ENCODE measurements at regions of chr1 and their contacts with region 1.

Region 1: DNA sequence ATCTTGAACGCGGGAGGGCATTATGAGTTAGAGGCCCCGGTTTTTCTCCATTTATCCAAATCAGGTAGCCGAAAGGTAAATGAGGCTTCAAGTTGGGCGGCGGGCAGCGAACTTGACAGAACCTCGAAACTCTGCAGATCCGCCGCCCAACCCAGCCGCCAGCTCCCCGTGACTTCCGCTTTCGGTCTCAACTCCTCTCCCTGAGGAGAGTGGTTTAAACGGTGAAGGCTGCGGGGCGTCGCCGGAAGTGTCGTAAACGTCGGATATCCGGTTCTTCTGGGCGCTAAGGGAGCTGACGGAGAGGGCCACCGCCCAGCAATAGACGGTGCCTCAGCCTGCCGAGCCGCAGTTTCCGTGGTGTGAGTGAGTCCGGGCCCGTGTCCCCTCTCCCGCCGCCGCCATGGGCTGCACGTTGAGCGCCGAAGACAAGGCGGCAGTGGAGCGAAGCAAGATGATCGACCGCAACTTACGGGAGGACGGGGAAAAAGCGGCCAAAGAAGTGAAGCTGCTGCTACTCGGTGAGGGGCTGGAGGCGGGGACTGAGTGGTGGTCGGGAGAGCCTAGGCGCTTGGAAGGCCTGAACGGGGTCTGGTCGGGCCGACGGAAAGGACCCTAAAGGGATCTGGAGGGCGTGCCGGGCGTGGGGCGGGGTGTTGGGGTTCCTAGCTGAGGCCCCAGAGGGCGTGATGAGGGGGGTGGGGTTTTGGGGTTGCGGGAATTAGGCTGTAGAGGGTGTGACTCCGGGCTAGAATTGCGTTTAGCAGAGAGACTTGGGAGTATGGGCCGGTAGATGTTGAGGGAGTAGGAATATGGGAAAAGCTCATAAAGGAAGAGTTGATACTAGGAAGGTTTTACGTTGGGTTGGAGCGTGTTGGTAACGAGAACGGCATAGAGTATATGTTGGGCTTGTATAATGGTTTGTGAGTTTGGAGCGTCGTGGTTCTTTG is at the start of gene GNAI3:
- DNase-seq: peak; percentile 95 to 99 (median 98)

Region 2: DNA sequence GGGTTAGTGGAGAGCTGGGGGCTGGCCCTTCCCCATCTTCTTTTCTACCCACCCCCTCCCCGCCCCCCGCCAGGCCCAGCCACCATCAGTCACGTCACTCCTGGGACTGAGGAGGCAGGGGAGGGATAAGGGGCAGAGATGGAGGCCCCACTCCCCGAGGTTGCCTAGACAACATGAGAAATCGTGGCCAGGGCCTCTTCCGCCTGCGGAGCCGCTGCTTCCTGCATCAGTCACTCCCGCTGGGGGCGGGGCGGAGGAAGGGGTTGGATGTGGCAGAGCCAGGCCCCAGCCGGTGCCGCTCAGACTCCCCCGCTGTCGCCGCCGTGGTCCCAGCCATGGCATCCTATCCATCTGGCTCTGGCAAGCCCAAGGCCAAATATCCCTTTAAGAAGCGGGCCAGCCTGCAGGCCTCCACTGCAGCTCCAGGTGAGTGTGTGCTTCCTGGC is 72.3 kb after region 1 on chr1:
- intact Hi-C with region 1: loop called (anchors 5 kb)
- DNase-seq: peak; percentile 87 to 99 (median 94)

Region 3: GRCh38 chr1:109773146-109773899 is 224.7 kb after region 1 on chr1:
- intact Hi-C with region 1: loop called (anchors 1 kb)
- DNase-seq: peak; percentile 65 to 94 (median 86)

Measured in head of caudate nucleus (tissue), 42 donors.